ENCODE measurements at regions of chr18 and their contacts with region 1.

Region 1: DNA sequence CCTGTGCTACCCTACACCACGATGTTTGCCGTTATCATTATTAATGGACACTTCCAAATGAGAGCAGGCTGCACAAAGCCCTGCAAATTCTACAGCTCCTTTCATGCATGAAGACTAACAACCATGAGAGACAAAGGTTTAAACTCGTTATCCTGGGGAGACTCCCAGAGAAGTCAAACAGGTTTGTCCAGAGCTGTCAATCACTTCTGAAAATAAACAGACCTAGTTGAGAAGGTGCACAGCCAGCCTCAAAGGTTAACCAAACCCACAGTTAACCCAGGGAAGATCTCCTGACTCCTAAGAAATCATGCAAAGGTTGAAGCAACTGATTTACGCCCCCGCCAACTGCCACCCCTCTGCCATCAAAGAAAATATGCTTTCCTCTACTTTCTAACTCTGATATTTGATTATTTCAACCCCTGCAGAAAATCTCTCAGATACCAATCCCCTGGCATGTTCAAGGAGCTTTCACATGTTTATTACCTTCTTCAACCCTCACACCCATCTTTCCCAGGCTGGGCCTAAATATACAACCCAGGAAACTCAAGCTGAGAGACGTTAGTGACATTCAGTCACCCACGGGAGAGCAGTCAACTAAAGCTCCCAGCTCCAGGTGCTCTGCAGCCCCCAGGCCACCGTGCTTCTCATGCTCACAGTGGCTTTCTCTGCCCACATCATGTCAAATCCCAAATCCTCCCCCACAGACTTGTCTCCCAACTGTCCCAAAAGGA is 35.9 kb downstream of the MYO5B start:
- DNase-seq: no peak
- ATAC-seq: peak; percentile 66; the same call in 1 of the 2 replicates
- H3K4me3 ChIP-seq: no peak overlapping the region
- H3K27ac ChIP-seq: peak overlapping the region; percentile 50; the same call in 1 of the 2 replicates
- H3K4me1 ChIP-seq: peaks cover 29 to 31% of the 10 kb centered on the region in 2 experiments
- H3K27me3 ChIP-seq: no peaks in the 10 kb centered on the region
- CTCF ChIP-seq: no peak
- POLR2A ChIP-seq: no peak
- RAD21 ChIP-seq: no peak

Region 2: GRCh38 chr18:50138181-50139064 is 20.7 kb before region 1 on chr18:
- CTCF ChIA-PET with region 1: no interaction called
- POLR2A ChIA-PET with region 1: no interaction called
- RAD21 ChIA-PET with region 1: no interaction called
- intact Hi-C with region 1: no loop called
- DNase-seq: no peak
- ATAC-seq: no peak
- H3K4me3 ChIP-seq: no peak overlapping the region
- H3K27ac ChIP-seq: no peak overlapping the region
- H3K4me1 ChIP-seq: no peaks in the 10 kb centered on the region; a peak in 1 of 4 replicates
- H3K27me3 ChIP-seq: no peaks in the 10 kb centered on the region; the same call in 1 of the 2 replicates
- CTCF ChIP-seq: no peak
- POLR2A ChIP-seq: no peak
- RAD21 ChIP-seq: no peak

Region 3: GRCh38 chr18:50177294-50177992 is 18.4 kb after region 1 on chr18:
- CTCF ChIA-PET with region 1: no interaction called
- POLR2A ChIA-PET with region 1: no interaction called
- RAD21 ChIA-PET with region 1: no interaction called
- intact Hi-C with region 1: loop called (anchors 1 kb)
- DNase-seq: no peak
- ATAC-seq: no peak
- H3K4me3 ChIP-seq: no peak overlapping the region
- H3K27ac ChIP-seq: no peak overlapping the region
- H3K4me1 ChIP-seq: no peaks in the 10 kb centered on the region
- H3K27me3 ChIP-seq: no peaks in the 10 kb centered on the region
- CTCF ChIP-seq: no peak
- POLR2A ChIP-seq: no peak
- RAD21 ChIP-seq: no peak

Measured in HCT116 (cell line).